Esophagus muscularis mucosa (tissue), 4 donors: ENCODE measurements at regions of chr19 and their contacts with region 1.

Region 1: GRCh38 chr19:36772311-36773222 is at the start of gene ZNF850:
- DNase-seq: peak; percentile 98
- H3K4me3 ChIP-seq: peak within 1 kb of the TSS; percentile 59 to 77 (median 67)
- H3K27ac ChIP-seq: peak within 1 kb of the TSS; percentile 77 to 86 (median 82)
- H3K4me1 ChIP-seq: peaks cover 8 to 23% (median 21%) of the 10 kb centered on the region in 4 donors
- H3K27me3 ChIP-seq: peaks cover 0 to 8% (median 0%) of the 10 kb centered on the region in 4 donors
- CTCF ChIP-seq: peak in 1 of 3 experiments; percentile 13
- EP300 ChIP-seq: no peak
- POLR2A ChIP-seq: no peak
- total RNA-seq, gene ZNF850: 1.3 to 2.4 (median 2.0) TPM

Region 2: GRCh38 chr19:36796076-36796992 is 23.8 kb after region 1 on chr19:
- intact Hi-C with region 1: loop called (anchors 2 kb)
- DNase-seq: no peak
- H3K4me3 ChIP-seq: peak overlapping the region; percentile 69 to 82 (median 74)
- H3K27ac ChIP-seq: peak overlapping the region; percentile 74 to 90 (median 77)
- H3K4me1 ChIP-seq: peaks cover 5 to 25% (median 17%) of the 10 kb centered on the region in 4 donors
- H3K27me3 ChIP-seq: no peaks in the 10 kb centered on the region
- CTCF ChIP-seq: no peak
- EP300 ChIP-seq: no peak
- POLR2A ChIP-seq: no peak

Region 3: DNA sequence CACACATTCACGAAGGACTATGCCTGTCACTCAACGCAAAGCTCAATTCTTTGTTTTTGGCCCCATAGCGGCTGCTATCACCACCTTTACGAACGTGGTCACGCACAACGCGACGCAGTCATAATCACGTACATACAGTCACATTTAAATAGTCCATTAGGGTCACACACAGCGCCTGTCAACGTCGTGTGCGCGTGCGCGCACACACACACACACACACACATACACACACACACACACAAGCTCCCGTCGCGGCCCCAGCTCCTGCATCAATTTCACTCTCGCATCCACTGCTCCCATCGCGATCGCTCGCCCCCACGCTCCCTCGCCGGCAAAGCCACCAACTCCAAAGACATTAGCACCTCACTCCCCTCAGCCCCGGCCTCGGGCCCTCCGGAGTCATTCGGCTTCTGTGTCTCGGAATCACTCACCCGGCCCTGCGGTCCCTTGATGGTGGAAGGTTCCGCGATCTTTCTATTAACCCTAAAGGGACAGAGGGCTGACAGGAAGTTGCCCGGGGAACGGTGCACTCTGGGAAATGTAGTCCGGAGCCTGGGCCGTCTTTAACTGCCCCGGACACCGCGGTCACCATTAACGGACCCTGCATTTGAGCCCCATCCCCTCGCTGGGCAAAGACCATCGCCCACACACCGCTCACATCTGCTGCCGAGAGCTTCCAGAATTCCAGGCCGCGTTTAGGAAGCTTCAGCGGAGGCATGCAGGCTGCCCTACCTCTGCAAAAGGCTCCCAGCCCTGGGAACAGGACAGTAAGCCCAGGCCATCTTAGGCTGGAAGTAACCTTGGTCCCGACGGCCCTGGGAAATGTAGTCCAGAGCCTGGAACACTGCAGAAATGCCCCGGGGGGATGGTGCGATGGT is 65.6 kb after region 1 on chr19 and contains the start of gene ZNF790:
- intact Hi-C with region 1: loop called (anchors 5 kb)
- DNase-seq: peak; percentile 98
- H3K4me3 ChIP-seq: peak within 1 kb of the TSS; percentile 62 to 88 (median 80)
- H3K27ac ChIP-seq: peak within 1 kb of the TSS; percentile 85 to 90 (median 88)
- H3K4me1 ChIP-seq: peaks cover 19 to 25% (median 19%) of the 10 kb centered on the region in 4 donors
- H3K27me3 ChIP-seq: no peaks in the 10 kb centered on the region
- CTCF ChIP-seq: no peak
- EP300 ChIP-seq: no peak
- POLR2A ChIP-seq: no peak
- total RNA-seq, gene ZNF790: 5.8 to 11.1 (median 7.8) TPM

Region 4: GRCh38 chr19:36915992-36916830 is 143.6 kb after region 1 on chr19 and contains the starts of genes ZNF568 and ZNF829:
- intact Hi-C with region 1: loop called (anchors 10 kb)
- DNase-seq: peak; percentile 98
- H3K4me3 ChIP-seq: peak within 1 kb of the TSS; percentile 78 to 89 (median 86)
- H3K27ac ChIP-seq: peak within 1 kb of the TSS; percentile 91 to 97 (median 96)
- H3K4me1 ChIP-seq: peaks cover 12 to 21% (median 18%) of the 10 kb centered on the region in 4 donors
- H3K27me3 ChIP-seq: no peaks in the 10 kb centered on the region
- CTCF ChIP-seq: peak; percentile 57 to 68 (median 61)
- EP300 ChIP-seq: no peak
- POLR2A ChIP-seq: no peak
- total RNA-seq, gene ZNF568: 9.1 to 14.7 (median 12.6) TPM
- total RNA-seq, gene ZNF829: 2.5 to 5.4 (median 4.1) TPM